Activated T-helper 2 cell treated with anti-CD3 and anti-CD28 coated beads, Interferon-gamma antibody, Interleukin-2, Interleukin-4, amounts not matched to agents 10 μg/mL and 5 μg/mL and 100 μg/mL, durations not matched to agents 14 hours and 24 hours and 36 hours (primary cell): ENCODE measurements at regions of chr10 and their contacts with region 1.

Region 1: GRCh38 chr10:121823993-121824463 is 103.8 kb downstream of the ATE1 start:
- DNase-seq: no peak
- H3K4me3 Mint-ChIP-seq: no peak overlapping the region
- H3K27ac Mint-ChIP-seq: no peak overlapping the region
- H3K4me1 Mint-ChIP-seq: no peaks in the 10 kb centered on the region
- H3K27me3 Mint-ChIP-seq: no peaks in the 10 kb centered on the region

Region 2: DNA sequence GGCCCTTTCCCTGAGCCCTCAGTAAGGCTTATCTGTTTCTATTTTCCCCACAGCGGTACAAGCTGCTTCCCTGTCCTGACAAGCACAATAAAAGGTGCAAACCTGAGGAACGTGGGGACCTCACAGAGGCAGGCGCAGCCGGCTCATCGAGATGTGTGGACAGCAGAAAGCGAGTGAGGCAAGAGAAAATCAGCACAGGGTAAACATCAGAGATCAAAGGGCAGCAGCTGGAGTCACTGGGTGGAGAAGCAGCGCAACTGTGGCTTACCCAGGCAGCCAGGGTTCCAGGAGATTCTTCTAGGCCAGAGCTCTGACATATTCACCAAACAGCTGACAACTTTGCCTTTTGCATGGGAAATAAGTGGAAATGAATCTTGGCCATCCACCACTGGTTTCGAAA is 760.3 kb before region 1 on chr10:
- intact Hi-C with region 1: no loop called
- DNase-seq: no peak
- H3K4me3 Mint-ChIP-seq: no peak overlapping the region
- H3K27ac Mint-ChIP-seq: no peak overlapping the region
- H3K4me1 Mint-ChIP-seq: no peaks in the 10 kb centered on the region
- H3K27me3 Mint-ChIP-seq: no peaks in the 10 kb centered on the region

Region 3: DNA sequence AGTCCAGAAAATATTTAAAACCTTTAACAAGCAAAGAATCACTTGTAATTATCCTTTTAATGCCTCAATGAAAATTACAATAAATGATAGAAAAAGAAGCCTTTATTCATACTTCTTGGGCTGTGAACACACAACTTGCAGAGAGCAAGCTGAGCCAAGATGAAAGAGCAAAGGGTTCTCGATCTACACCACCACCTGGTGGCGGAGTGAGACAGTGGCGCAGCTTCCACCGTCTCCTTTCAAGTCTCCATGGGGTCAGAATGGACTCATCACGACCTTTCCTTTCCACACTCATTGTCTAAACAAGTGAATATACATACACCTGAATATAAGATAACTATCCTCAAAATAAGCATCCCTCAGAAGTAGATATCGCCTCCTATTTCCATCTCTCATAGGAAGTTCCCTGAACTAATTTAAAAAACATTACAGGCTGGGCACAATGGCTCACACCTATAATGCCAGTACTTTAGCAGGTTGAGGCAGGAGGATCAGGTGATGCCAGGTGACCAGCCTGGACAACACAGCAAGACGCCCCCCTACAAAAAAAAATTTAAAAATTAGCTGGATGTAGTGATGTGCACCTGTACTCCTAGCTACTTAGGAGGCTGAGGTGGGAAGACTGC is 63.1 kb after region 1 on chr10:
- intact Hi-C with region 1: loop called (anchors 1 kb)
- DNase-seq: peak; percentile 12
- H3K4me3 Mint-ChIP-seq: no peak overlapping the region
- H3K27ac Mint-ChIP-seq: no peak overlapping the region
- H3K4me1 Mint-ChIP-seq: peaks cover 4% of the 10 kb centered on the region
- H3K27me3 Mint-ChIP-seq: no peaks in the 10 kb centered on the region

Region 4: DNA sequence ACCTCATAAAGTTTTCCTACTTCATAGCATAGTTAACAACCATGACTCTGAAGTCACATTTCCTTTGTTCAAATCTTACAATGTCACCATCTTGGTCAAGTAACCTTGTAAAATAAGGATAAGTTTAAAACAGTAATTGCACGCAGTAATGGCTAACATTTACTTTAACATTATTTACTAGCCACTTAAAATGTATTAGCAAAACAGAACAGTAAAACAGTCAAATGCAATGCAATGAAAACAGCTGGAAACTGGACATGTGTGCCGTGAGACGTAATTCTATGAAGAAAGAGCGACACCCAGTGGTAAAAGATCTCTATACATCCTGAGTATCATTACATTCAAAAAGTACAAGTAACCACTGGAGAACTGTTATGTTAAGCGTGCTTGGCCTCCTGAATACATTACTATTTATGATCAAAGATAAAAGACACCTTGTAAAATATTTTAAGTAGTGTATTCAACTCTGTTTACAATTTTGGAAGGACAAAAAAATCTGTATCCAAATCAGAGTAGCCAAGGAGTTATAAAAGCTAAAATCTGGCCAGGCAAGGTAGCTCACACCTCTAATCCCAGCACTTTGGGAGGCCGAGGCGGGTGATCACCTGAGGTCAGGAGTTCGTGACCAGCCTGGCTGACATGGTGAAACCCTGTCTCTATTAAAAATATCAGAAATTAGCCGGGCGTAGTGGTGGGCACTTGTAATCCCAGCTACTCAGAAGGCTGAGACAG is 76.6 kb after region 1 on chr10:
- intact Hi-C with region 1: loop called (anchors 5 kb)
- DNase-seq: no peak
- H3K4me3 Mint-ChIP-seq: no peak overlapping the region
- H3K27ac Mint-ChIP-seq: no peak overlapping the region
- H3K4me1 Mint-ChIP-seq: no peaks in the 10 kb centered on the region
- H3K27me3 Mint-ChIP-seq: no peaks in the 10 kb centered on the region